PC-9 (cell line): ENCODE measurements at regions of chr7 and their contacts with region 1.

Region 1: GRCh38 chr7:82511542-82511941 is 68.0 kb upstream of the CACNA2D1 start:
- DNase-seq: no peak
- H3K4me3 ChIP-seq: no peak overlapping the region
- H3K27ac ChIP-seq: no peak overlapping the region
- H3K4me1 ChIP-seq: 0 out of 2 replicates have a peak, but pooled peaks cover 7% of the 10 kb centered on the region
- H3K27me3 ChIP-seq: no peaks in the 10 kb centered on the region
- CTCF ChIP-seq: no peak

Region 2: GRCh38 chr7:82263920-82264782 is 247.4 kb before region 1 on chr7:
- CTCF ChIA-PET with region 1: interaction called, 16 read pairs
- POLR2A ChIA-PET with region 1: no interaction called
- intact Hi-C with region 1: no loop called
- DNase-seq: no peak
- H3K4me3 ChIP-seq: no peak overlapping the region
- H3K27ac ChIP-seq: no peak overlapping the region
- H3K4me1 ChIP-seq: no peaks in the 10 kb centered on the region
- H3K27me3 ChIP-seq: no peaks in the 10 kb centered on the region
- CTCF ChIP-seq: no peak

Region 3: GRCh38 chr7:82348251-82348650 is 163.3 kb before region 1 on chr7:
- CTCF ChIA-PET with region 1: no interaction called
- POLR2A ChIA-PET with region 1: no interaction called
- intact Hi-C with region 1: no loop called
- DNase-seq: no peak
- H3K4me3 ChIP-seq: no peak overlapping the region
- H3K27ac ChIP-seq: no peak overlapping the region
- H3K4me1 ChIP-seq: no peaks in the 10 kb centered on the region
- H3K27me3 ChIP-seq: no peaks in the 10 kb centered on the region
- CTCF ChIP-seq: no peak